Left ventricle myocardium superior (tissue), 1 donor: ENCODE measurements at regions of chr2 and their contacts with region 1.

Region 1: GRCh38 chr2:127324635-127325034 is 30.7 kb upstream of the ERCC3 start:
- DNase-seq: no peak
- ATAC-seq: no peak

Region 2: GRCh38 chr2:127233710-127234109 is 90.9 kb before region 1 on chr2:
- intact Hi-C with region 1: no loop called
- DNase-seq: no peak
- ATAC-seq: no peak

Region 3: GRCh38 chr2:127479219-127479825 is 154.7 kb after region 1 on chr2:
- intact Hi-C with region 1: loop called (anchors 5 kb)
- DNase-seq: no peak
- ATAC-seq: peak; percentile 66